RWPE1 (cell line): ENCODE measurements at regions of chr5 and their contacts with region 1.

Region 1: DNA sequence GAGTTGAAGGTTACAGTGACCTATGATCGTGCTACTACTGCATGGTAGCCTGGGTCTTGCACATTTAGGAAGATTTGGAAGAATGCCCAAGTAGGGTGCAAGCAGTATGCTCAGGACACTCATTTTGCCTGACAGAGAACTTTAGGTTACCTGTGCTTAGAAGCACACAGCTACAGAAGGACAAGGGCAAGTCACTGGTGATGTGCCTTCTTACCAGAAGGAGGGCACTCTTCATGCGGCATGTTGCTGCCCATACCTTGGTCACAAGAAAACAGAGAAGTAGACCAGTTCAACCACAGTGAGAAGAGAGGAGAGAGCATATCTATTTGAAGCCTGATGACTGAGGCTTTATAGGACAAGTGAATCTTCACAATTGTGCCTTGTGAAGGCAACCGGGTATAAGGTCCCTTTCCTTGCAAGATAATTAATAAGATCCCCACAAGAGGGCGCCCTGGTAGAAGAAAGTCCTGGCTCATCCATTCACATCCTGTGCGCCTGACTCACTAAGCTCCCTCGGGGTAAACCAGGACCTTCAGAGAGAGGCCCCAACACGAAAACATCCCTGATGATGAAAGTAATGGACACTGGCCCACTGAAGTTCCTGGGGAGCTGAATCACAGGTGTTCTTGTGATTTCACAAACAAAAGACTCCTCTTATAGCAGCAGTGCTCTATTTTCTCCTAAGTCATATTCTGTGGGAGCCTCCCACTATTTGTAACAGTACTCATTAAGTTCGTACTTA is 38.1 kb upstream of the STARD4 start:
- DNase-seq: peak; percentile 100
- H3K27ac ChIP-seq: no peak overlapping the region
- CTCF ChIP-seq: peak; percentile 83

Region 2: DNA sequence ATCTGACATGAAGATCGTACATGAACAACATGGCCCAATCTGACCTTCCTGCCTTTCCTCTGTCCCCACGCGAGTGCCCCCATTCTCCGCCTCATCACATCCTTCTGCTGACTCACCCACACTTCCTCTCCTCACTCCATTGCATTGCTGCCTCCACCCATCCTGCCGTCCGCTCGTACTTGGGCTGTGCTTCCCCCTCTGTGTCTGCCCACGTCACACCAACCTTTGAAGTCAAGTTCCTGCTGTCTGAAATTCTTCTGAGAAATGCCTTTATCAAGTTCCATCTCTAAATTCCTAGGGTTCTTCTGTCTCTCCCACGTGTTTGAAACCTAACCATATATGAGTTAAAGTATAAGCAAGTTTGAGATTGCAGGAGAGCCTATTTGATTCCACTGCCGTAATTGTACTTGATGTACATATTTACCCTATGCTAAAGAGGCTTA is 20.1 kb before region 1 on chr5:
- CTCF ChIA-PET with region 1: interaction called, 12 read pairs
- POLR2A ChIA-PET with region 1: no interaction called
- DNase-seq: peak; percentile 37
- H3K27ac ChIP-seq: peak overlapping the region; percentile 59
- CTCF ChIP-seq: no peak

Region 3: DNA sequence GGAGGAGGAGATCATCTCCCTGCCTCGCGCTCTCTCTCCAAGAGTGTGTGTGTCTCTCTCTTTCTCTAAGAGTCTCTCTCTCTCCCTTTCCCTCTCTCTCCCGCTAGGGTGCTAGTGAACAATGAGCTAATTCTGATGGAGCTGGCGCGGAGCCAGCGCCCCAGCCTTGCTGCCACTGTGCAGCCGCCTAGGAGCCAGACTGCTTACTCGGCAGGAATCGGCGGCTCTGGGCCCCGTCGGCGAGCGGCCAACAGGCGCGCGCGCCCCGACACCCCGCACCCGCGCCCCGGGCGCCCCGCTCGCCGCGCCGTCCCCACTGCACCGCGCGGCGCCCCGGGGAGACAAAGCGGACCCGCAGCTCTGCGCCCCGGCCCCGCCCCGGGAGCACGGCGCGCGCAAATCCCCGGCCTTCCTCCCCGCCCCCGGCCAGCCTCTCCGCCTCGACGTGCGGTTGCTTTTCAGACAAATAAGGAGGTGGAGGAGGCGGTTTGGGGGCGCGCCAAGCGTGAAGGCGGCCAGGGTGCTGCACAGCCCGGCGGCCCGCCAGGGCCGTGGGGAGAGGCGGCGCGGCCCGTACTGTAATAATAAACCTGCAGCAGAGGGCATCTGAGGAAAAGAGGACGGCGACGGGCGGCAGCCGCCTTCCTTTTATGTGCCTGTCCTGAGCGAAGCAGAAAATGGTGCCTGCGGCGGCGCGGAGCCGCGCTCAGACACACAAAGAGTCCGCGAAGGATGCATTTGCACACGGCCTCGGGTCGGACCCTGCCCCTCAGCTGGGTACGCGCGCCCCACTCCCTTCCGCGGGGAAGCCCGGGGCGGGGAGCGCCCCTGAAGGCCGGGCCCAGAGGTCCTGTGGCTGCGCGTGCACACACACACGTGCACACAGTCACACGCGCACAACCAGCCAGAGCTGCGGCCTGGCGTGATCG is 207.2 kb after region 1 on chr5:
- CTCF ChIA-PET with region 1: interaction called, 13 read pairs
- POLR2A ChIA-PET with region 1: no interaction called
- DNase-seq: peak; percentile 93
- H3K27ac ChIP-seq: peak overlapping the region; percentile 97
- CTCF ChIP-seq: peak; percentile 33; the same call in 1 of the 2 replicates

Region 4: GRCh38 chr5:111830333-111830732 is 279.9 kb after region 1 on chr5:
- CTCF ChIA-PET with region 1: interaction called, 10 read pairs
- POLR2A ChIA-PET with region 1: no interaction called
- DNase-seq: peak; percentile 96
- H3K27ac ChIP-seq: no peak overlapping the region
- CTCF ChIP-seq: no peak

Region 5: GRCh38 chr5:112146323-112147226 is 596.1 kb after region 1 on chr5:
- CTCF ChIA-PET with region 1: interaction called, 27 read pairs
- POLR2A ChIA-PET with region 1: no interaction called
- DNase-seq: peak; percentile 77
- H3K27ac ChIP-seq: no peak overlapping the region
- CTCF ChIP-seq: peak; percentile 95